ENCODE measurements at regions of chr3 and their contacts with region 1.

Region 1: DNA sequence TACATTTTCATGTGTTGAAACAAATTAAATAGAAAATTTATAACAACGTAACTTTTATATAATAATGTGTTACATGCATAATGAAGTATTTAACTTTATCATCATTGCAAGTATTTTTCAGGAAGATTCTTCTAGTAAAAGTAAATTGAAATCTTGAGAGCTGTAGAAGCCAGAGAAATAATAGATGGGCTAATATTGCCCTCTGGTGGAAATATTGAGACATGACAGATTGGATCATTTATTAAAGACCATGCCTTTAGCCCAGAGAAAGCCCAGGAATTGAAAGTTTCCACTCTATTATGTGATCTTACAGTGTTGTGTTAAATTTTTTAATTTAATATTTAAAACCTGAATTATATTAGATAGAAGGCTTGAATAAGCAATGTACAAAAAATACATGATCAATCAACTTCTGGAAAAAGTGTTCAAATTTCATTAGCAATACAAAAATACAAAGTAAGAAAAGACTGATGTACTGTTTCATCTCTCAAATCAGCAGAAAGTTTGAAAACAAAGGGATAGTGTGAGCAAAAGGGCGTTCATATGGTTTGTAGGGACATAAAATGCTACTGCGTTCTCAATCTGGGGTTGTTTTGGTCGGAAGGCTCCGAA is 52.7 kb upstream of the SPTSSB start:
- DNase-seq: no peak
- ATAC-seq: peak; percentile 41 to 69
- H3K4me3 ChIP-seq: no peak overlapping the region
- H3K27ac ChIP-seq: no peak overlapping the region
- H3K4me1 ChIP-seq: no peaks in the 10 kb centered on the region
- H3K27me3 ChIP-seq: no peaks in the 10 kb centered on the region
- CTCF ChIP-seq: peak; percentile 56 to 77 (median 72)
- POLR2A ChIP-seq: no peak

Region 2: DNA sequence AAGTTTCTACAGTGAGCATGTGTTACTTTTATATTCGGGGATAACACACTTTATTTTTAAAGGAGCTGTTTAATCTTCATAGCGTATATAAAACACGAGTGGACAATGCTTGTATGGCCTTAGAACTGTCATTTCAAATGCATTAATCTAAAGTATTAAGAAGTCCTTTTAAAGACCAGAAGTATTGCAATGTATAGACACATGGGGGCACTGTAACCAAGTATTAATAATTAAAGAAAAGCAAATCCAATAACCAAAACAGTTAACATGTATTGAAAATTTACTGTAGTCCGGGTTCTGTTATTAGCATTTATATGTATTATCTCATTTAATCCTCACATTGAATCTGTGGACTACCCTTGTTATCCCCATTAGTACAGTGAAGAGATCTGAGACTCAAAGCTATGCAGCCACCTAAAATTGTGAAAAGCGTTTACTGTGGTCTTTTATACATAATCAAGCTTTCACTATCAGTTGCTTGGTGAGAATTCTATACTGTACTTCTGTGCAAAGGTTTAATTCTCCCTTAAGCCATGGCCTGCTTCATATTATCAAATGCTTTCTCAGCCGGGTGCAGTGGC is 737.0 kb before region 1 on chr3:
- in situ Hi-C with region 1: loop called in 2 of 4 experiments (anchors 25 kb)
- intact Hi-C with region 1: loop called (anchors 5 kb)
- DNase-seq: no peak
- ATAC-seq: no peak
- H3K4me3 ChIP-seq: no peak overlapping the region
- H3K27ac ChIP-seq: no peak overlapping the region
- H3K4me1 ChIP-seq: no peaks in the 10 kb centered on the region
- H3K27me3 ChIP-seq: no peaks in the 10 kb centered on the region
- CTCF ChIP-seq: peak in 2 of 5 experiments; percentile 10 to 43
- POLR2A ChIP-seq: no peak

Region 3: DNA sequence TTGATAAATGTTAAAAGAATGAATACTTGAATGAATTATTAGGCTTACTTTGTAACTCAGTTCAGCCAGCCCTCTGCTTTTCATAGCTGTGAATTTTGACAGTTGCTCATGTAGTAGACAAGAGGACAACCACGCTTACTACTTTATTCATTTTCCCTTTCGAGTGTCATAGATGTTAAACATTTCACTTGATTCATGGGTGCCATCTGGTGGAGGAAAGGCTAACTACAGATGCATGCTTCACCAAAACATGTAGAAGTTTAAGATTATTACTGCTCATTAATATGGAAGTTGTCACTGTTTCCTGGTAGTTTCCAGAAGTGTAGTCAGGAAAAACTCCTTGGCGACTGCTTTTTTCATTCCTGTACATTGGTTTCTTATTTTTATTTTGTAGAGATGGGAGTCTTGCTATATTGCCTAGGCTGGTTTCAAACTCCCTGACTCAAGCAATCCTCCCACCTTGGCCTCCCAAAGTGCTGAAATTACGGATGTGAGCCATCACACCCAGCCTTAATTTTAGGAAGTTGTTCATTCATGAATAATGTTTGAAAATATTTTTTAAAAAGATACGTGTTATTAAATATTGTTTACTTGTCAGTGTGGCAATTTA is 482.0 kb before region 1 on chr3:
- in situ Hi-C with region 1: loop called in 1 of 4 experiments (anchors 25 kb)
- intact Hi-C with region 1: no loop called
- DNase-seq: peak; percentile 35 to 53
- ATAC-seq: peak; percentile 85 to 90
- H3K4me3 ChIP-seq: no peak overlapping the region
- H3K27ac ChIP-seq: peak overlapping the region in 1 of 4 donors; percentile 15
- H3K4me1 ChIP-seq: peaks cover 4 to 7% of the 10 kb centered on the region in 2 donors
- H3K27me3 ChIP-seq: no peaks in the 10 kb centered on the region
- CTCF ChIP-seq: peak; percentile 84 to 91 (median 86)
- POLR2A ChIP-seq: no peak

Region 4: DNA sequence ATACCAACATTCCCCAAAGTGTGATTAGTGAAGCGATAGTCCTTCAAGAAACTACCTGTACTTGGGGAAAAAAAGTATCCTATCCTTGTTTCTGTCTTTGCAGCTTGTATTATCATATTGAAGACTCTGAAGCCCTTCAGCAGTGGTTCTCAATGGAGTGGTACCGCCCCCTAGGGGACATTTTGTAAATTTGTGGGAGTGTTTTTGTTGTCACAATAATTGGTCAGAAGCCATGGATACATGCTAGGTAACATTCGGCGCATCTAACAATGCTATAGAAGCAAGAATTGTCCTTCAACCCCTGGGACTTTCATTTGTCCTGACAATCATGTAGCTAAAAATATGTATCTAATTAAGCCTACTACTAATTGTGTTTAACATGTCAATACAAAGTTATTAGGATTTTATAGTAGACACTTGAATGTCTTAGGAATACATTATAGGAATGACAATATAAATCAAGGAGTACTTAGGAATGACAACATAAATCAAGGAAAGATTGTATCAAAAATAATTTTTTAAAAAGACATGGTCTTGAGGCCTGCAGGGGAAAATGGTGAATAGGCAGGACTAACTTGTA is 149.2 kb before region 1 on chr3:
- in situ Hi-C with region 1: loop called (anchors 5 to 10 kb)
- intact Hi-C with region 1: loop called (anchors 5 kb)
- DNase-seq: no peak
- ATAC-seq: no peak
- H3K4me3 ChIP-seq: no peak overlapping the region
- H3K27ac ChIP-seq: no peak overlapping the region
- H3K4me1 ChIP-seq: no peaks in the 10 kb centered on the region
- H3K27me3 ChIP-seq: no peaks in the 10 kb centered on the region
- CTCF ChIP-seq: peak in 3 of 5 experiments; percentile 26 to 52 (median 35)
- POLR2A ChIP-seq: no peak

Region 5: GRCh38 chr3:161754420-161755053 is 330.5 kb after region 1 on chr3:
- in situ Hi-C with region 1: no loop called
- intact Hi-C with region 1: no loop called
- DNase-seq: no peak
- ATAC-seq: no peak
- H3K4me3 ChIP-seq: no peak overlapping the region
- H3K27ac ChIP-seq: no peak overlapping the region
- H3K4me1 ChIP-seq: no peaks in the 10 kb centered on the region
- H3K27me3 ChIP-seq: no peaks in the 10 kb centered on the region
- CTCF ChIP-seq: no peak
- POLR2A ChIP-seq: no peak